SK-N-SH (cell line): ENCODE measurements at regions of chr18 and their contacts with region 1.

Region 1: DNA sequence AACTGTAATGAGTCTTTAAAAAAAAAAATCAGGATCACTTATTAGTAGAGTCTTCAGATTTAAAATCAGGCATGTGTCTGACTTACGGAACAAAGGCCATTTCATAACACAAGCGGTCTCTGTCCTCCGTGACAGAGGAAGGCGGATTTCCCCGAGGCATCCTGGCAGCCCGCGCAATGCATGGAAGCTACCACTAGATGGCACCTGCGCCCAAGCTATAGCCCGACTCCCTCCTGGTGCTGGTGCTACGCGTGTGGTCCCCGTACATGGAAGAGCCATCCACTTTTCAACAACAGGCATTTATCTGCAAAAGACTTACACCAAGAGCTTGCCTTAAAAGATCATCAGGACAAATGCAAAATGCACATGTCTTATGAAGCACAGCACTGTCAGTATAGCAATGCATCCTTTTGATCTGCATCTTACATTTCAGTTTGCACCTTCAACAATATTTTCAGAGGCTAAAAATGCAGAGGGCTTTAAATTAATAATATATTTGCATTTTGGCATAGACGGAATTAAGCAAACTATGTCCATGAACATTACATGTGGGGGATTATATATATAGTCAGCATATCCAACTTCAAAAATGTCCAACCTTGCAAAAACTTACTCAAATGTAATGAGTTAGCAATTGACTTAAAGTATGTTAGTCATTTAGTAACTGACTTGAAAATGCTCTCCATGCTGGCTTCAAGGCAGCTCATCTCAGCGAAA is 96.0 kb downstream of the ZNF516 start:
- DNase-seq: peak; percentile 93
- H3K4me3 ChIP-seq: peak overlapping the region in 1 of 2 experiments; percentile 26; a peak in 1 of 4 replicates
- H3K27ac ChIP-seq: no peak overlapping the region
- H3K4me1 ChIP-seq: peaks cover 0 to 7% of the 10 kb centered on the region in 2 experiments; a peak in 2 of 4 replicates
- H3K27me3 ChIP-seq: no peaks in the 10 kb centered on the region
- CTCF ChIP-seq: peak; percentile 95
- EP300 ChIP-seq: no peak
- RAD21 ChIP-seq: peak; percentile 97

Region 2: DNA sequence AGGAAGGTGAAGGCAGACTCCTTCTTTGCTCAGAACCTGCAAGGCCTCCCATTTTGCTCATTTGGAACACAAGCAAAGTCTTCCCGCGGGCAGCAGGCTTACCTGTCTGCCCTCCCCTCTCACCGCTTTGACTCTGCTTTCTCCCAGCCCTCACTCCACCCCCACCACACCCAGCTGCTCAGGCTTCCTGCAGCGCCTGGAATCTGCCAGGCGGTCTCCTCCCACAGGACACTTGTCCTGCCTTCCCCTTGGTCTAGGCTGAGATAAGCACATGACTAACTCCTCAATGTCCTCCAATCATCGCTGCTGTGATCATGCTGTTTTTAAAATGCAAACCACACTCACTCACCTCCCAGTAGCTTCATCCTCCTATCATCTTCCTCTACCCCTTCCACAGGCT is 334.1 kb before region 1 on chr18:
- CTCF ChIA-PET with region 1: no interaction called
- POLR2A ChIA-PET with region 1: no interaction called
- DNase-seq: no peak
- H3K4me3 ChIP-seq: no peak overlapping the region
- H3K27ac ChIP-seq: no peak overlapping the region
- H3K4me1 ChIP-seq: no peaks in the 10 kb centered on the region
- H3K27me3 ChIP-seq: no peaks in the 10 kb centered on the region
- CTCF ChIP-seq: no peak
- EP300 ChIP-seq: no peak
- RAD21 ChIP-seq: no peak

Region 3: DNA sequence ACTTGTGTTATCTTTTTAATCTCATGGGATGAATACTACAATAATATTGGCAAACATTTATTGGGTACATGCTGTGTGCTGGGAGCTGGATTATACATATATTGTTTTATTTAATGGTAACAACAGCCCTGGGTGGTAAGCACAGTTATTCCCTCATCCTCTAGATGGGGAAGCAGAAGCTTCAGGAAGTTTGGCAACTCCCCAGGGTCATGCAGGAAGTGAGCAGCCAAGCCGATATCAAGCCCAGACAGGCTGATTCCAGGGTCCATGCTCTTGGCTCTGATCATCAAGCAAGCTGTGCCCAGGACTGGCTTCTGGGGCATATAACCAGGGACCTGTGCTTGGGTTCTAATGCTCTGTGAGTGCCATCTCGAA is 59.8 kb before region 1 on chr18:
- CTCF ChIA-PET with region 1: no interaction called
- POLR2A ChIA-PET with region 1: no interaction called
- DNase-seq: no peak
- H3K4me3 ChIP-seq: no peak overlapping the region
- H3K27ac ChIP-seq: no peak overlapping the region
- H3K4me1 ChIP-seq: no peaks in the 10 kb centered on the region
- H3K27me3 ChIP-seq: no peaks in the 10 kb centered on the region
- CTCF ChIP-seq: no peak
- EP300 ChIP-seq: no peak
- RAD21 ChIP-seq: no peak

Region 4: GRCh38 chr18:76388891-76389423 is 10.1 kb before region 1 on chr18:
- CTCF ChIA-PET with region 1: interaction called, 16 read pairs
- POLR2A ChIA-PET with region 1: no interaction called
- DNase-seq: no peak
- H3K4me3 ChIP-seq: no peak overlapping the region
- H3K27ac ChIP-seq: no peak overlapping the region
- H3K4me1 ChIP-seq: no peaks in the 10 kb centered on the region; a peak in 1 of 4 replicates
- H3K27me3 ChIP-seq: no peaks in the 10 kb centered on the region
- CTCF ChIP-seq: no peak
- EP300 ChIP-seq: no peak
- RAD21 ChIP-seq: no peak

Region 5: GRCh38 chr18:76419811-76420210 is 20.8 kb after region 1 on chr18:
- CTCF ChIA-PET with region 1: no interaction called
- POLR2A ChIA-PET with region 1: no interaction called
- DNase-seq: no peak
- H3K4me3 ChIP-seq: no peak overlapping the region
- H3K27ac ChIP-seq: no peak overlapping the region
- H3K4me1 ChIP-seq: peaks cover 0 to 2% of the 10 kb centered on the region in 2 experiments; a peak in 1 of 4 replicates
- H3K27me3 ChIP-seq: no peaks in the 10 kb centered on the region
- CTCF ChIP-seq: no peak
- EP300 ChIP-seq: no peak
- RAD21 ChIP-seq: no peak

Region 6: GRCh38 chr18:76475452-76476194 is 76.6 kb after region 1 on chr18:
- CTCF ChIA-PET with region 1: interaction called, 10 read pairs
- POLR2A ChIA-PET with region 1: no interaction called
- DNase-seq: peak; percentile 53
- H3K4me3 ChIP-seq: no peak overlapping the region
- H3K27ac ChIP-seq: peak overlapping the region in 1 of 2 experiments; percentile 67; a peak in 2 of 4 replicates
- H3K4me1 ChIP-seq: peaks cover 0 to 7% of the 10 kb centered on the region in 2 experiments; a peak in 2 of 4 replicates
- H3K27me3 ChIP-seq: 0 out of 2 replicates have a peak, but pooled peaks cover 5% of the 10 kb centered on the region
- CTCF ChIP-seq: peak; percentile 44
- EP300 ChIP-seq: no peak
- RAD21 ChIP-seq: peak; percentile 48

Region 7: DNA sequence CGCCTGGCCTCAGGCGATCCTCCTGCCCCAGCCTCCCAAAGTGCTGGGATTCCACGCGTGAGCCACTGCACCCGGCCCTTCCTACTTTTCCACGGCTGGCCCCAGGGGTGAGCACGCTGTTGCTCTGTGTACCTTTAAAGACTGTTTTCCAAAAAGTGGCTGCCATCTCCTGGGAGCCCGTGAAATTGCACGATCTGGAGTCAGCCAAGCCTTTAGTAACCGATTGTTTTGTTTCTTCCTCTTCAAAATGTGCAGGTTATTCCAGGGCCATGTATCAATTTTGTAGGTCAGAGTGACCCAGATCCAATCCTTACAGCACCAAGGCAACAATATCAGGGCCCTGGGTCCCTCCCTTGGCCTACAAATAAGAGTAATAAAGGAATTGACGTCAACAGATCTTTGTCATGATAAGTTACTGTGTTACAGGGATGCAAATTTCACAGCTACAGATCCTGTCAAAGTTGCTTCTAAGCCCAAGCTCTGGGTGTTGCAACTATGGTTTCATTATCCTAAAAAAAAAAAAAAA is 287.7 kb after region 1 on chr18:
- CTCF ChIA-PET with region 1: interaction called, 32 read pairs
- POLR2A ChIA-PET with region 1: no interaction called
- DNase-seq: peak; percentile 77
- H3K4me3 ChIP-seq: peak overlapping the region in 1 of 2 experiments; percentile 32; a peak in 1 of 4 replicates
- H3K27ac ChIP-seq: no peak overlapping the region
- H3K4me1 ChIP-seq: peaks cover 0 to 2% of the 10 kb centered on the region in 2 experiments; a peak in 1 of 4 replicates
- H3K27me3 ChIP-seq: no peaks in the 10 kb centered on the region; the same call in 1 of the 2 replicates
- CTCF ChIP-seq: peak; percentile 64
- EP300 ChIP-seq: no peak
- RAD21 ChIP-seq: peak; percentile 76

Region 8: GRCh38 chr18:76709659-76710645 is 310.9 kb after region 1 on chr18:
- CTCF ChIA-PET with region 1: interaction called, 122 read pairs
- POLR2A ChIA-PET with region 1: no interaction called
- DNase-seq: peak; percentile 81
- H3K4me3 ChIP-seq: peak overlapping the region in 1 of 2 experiments; percentile 14; a peak in 1 of 4 replicates
- H3K27ac ChIP-seq: no peak overlapping the region
- H3K4me1 ChIP-seq: no peaks in the 10 kb centered on the region; a peak in 1 of 4 replicates
- H3K27me3 ChIP-seq: no peaks in the 10 kb centered on the region
- CTCF ChIP-seq: peak; percentile 90
- EP300 ChIP-seq: no peak
- RAD21 ChIP-seq: peak; percentile 93